ENCODE measurements at regions of chr12 and their contacts with region 1.

Region 1: GRCh38 chr12:75913502-75914351 is 117.8 kb downstream of the PHLDA1 start:
- DNase-seq: no peak
- H3K4me3 Mint-ChIP-seq: no peak overlapping the region
- H3K27ac Mint-ChIP-seq: peak overlapping the region; percentile 40
- H3K4me1 Mint-ChIP-seq: peaks cover 27% of the 10 kb centered on the region
- H3K27me3 Mint-ChIP-seq: peaks cover 1% of the 10 kb centered on the region

Region 2: DNA sequence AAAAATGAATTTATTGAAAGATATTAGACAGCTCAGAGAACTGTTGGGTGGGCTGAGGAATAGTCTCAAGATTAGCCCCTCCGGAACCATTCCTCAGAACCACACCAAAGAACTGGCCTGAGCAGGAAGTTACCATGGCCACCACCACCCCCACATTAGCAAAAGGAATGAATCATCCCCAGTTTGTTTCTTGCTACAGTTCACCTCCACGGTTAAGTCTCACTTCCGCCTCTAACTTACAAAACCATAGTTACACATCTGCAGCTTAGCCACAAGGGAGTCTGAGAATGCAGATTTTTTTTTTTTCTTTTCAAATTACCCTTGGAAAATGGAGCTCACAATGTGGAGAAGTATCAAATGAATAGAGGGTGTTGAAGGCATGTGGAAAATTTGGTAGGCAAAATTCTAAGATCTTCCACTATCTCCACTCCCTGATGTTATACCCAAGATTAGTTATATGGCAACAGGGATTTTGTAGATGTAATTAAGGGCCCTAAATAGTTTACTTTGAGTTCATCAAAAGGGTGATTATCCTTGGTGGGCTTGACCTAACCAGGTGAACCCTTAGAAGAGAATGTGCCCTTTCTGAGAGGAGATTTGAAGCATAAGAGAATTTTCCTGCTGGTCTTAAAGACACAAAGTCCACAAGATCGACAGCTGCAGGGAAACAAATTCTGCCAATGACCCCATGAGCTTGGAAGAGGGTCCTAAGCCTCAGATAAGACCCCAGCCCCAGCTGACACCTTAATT is 272.5 kb before region 1 on chr12:
- intact Hi-C with region 1: loop called (anchors 1 kb)
- DNase-seq: peak; percentile 27
- H3K4me3 Mint-ChIP-seq: no peak overlapping the region
- H3K27ac Mint-ChIP-seq: peak overlapping the region; percentile 76
- H3K4me1 Mint-ChIP-seq: peaks cover 46% of the 10 kb centered on the region
- H3K27me3 Mint-ChIP-seq: peaks cover 12% of the 10 kb centered on the region

Region 3: DNA sequence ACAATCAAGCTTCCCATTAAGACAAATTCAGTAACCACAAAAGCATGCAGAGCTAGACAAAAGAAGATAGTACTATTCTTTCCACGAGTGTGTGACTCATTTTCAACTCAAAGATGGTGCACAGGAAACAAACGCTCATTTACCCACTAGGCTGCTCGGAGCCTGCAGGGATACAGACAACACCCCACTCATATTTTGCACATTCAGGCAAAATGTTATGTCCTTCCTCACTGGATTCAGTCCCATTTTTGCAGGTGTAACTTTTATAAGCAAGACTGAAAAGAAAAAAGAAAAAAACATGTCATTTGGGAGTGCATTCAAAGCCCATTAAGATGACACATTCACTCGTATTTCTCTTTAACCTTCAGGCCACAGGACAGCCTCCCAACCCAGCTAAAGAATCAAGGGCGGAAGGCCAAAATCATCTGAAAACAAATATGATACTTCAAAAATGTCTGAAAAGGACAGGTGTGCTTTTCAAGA is 254.8 kb before region 1 on chr12:
- intact Hi-C with region 1: loop called (anchors 5 kb)
- DNase-seq: peak; percentile 9
- H3K4me3 Mint-ChIP-seq: no peak overlapping the region
- H3K27ac Mint-ChIP-seq: peak overlapping the region; percentile 5
- H3K4me1 Mint-ChIP-seq: peaks cover 34% of the 10 kb centered on the region
- H3K27me3 Mint-ChIP-seq: peaks cover 6% of the 10 kb centered on the region

Region 4: GRCh38 chr12:75814851-75815754 is 98.6 kb before region 1 on chr12:
- intact Hi-C with region 1: loop called (anchors 5 kb)
- DNase-seq: no peak
- H3K4me3 Mint-ChIP-seq: no peak overlapping the region
- H3K27ac Mint-ChIP-seq: no peak overlapping the region
- H3K4me1 Mint-ChIP-seq: peaks cover 8% of the 10 kb centered on the region
- H3K27me3 Mint-ChIP-seq: peaks cover 9% of the 10 kb centered on the region

Region 5: GRCh38 chr12:75944097-75944904 is 30.6 kb after region 1 on chr12:
- intact Hi-C with region 1: loop called (anchors 1 kb)
- DNase-seq: no peak
- H3K4me3 Mint-ChIP-seq: peak overlapping the region; percentile 52
- H3K27ac Mint-ChIP-seq: peak overlapping the region; percentile 97
- H3K4me1 Mint-ChIP-seq: peaks cover 32% of the 10 kb centered on the region
- H3K27me3 Mint-ChIP-seq: no peaks in the 10 kb centered on the region

Region 6: GRCh38 chr12:76020731-76021672 is 107.3 kb after region 1 on chr12:
- intact Hi-C with region 1: loop called (anchors 1 kb)
- DNase-seq: peak; percentile 67
- H3K4me3 Mint-ChIP-seq: peak overlapping the region; percentile 66
- H3K27ac Mint-ChIP-seq: peak overlapping the region; percentile 99
- H3K4me1 Mint-ChIP-seq: peaks cover 60% of the 10 kb centered on the region
- H3K27me3 Mint-ChIP-seq: no peaks in the 10 kb centered on the region